GM12878 (cell line): ENCODE measurements at regions of chr2 and their contacts with region 1.

Region 1: DNA sequence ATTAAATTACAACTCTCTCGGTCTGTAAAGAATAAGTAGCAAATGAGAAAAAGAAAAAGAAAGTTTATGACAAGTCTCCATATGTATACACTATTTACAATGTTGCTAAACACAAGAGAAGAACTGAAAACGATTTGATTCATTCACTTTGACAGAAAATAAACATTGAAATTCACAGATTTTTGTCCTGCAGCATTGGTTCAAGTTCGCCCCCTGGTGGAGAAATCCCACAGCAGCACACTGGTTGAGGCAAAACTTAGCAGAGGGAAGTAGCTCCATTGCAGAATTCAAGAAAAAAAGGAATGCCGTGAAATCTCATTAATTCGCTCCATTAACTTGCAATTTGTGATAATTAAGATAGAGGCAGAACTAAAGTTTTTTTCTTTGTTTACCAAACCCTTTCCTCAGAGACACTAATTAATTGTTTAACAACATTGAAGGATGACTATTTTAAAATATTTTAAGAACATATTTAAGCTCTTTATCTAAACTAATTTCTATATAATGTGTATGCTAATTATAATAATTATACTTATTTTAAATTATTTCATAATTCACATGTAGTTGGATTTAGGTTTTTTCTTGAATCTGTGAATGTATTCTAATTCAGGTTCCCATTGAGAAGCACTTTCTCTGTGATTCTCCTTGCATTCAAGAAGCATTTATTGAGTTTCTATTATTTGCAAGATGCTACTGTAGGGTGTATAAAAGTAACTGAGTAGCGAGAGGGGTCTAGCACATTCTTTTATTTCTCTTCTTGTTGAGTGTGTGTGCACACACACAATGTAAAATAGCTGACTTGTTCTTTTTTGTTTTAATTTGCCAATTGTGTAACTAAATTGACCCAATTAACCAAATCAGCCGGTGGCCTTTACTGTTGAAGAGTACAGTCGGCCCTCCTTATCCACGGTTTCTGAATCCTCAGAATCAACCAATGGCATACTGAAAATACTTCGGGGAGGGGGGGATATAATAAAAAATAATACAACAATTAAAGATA is 74.1 kb downstream of the COL4A3 start:
- DNase-seq: peak; percentile 21
- ATAC-seq: peak; percentile 80
- H3K4me3 ChIP-seq: no peak overlapping the region
- H3K27ac ChIP-seq: no peak overlapping the region
- H3K4me1 ChIP-seq: no peaks in the 10 kb centered on the region
- H3K27me3 ChIP-seq: no peaks in the 10 kb centered on the region
- CTCF ChIP-seq: peak; percentile 89 to 95 (median 91); a peak in 5 of 6 replicates
- EP300 ChIP-seq: no peak
- POLR2A ChIP-seq: no peak
- RAD21 ChIP-seq: peak; percentile 97

Region 2: GRCh38 chr2:225668606-225669266 is 1569.8 kb before region 1 on chr2:
- CTCF ChIA-PET with region 1: interaction called, 5 read pairs
- POLR2A ChIA-PET with region 1: no interaction called
- RAD21 ChIA-PET with region 1: no interaction called
- SMC1A ChIA-PET with region 1: interaction called, 6 read pairs
- in situ Hi-C with region 1: no loop called
- intact Hi-C with region 1: loop called (anchors 5 kb)
- DNase-seq: peak; percentile 12
- ATAC-seq: peak; percentile 94
- H3K4me3 ChIP-seq: no peak overlapping the region
- H3K27ac ChIP-seq: no peak overlapping the region
- H3K4me1 ChIP-seq: no peaks in the 10 kb centered on the region
- H3K27me3 ChIP-seq: no peaks in the 10 kb centered on the region
- CTCF ChIP-seq: peak; percentile 72 to 75 (median 73)
- EP300 ChIP-seq: no peak
- POLR2A ChIP-seq: no peak
- RAD21 ChIP-seq: peak; percentile 71

Region 3: DNA sequence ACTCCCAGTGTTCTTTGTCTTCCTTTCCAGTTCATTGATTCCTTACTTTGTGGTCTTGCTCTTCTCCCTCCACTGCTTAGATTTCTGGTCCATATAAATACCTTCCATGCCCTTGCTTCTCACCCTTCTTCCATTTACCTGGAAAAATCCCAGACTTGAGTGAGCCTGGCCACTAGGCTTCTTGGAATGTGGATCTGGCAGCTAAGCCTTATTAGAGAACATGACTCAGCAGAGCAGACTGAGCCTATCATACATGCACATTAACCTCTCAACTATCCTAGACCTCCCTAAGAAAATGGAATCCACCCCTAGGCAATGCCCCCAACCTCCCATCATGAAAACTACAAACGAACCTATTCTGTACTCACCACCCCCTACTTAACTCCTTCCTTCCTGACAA is 275.0 kb before region 1 on chr2:
- CTCF ChIA-PET with region 1: no interaction called
- POLR2A ChIA-PET with region 1: no interaction called
- RAD21 ChIA-PET with region 1: no interaction called
- SMC1A ChIA-PET with region 1: no interaction called
- in situ Hi-C with region 1: no loop called
- intact Hi-C with region 1: no loop called
- DNase-seq: no peak
- ATAC-seq: no peak
- H3K4me3 ChIP-seq: no peak overlapping the region
- H3K27ac ChIP-seq: no peak overlapping the region
- H3K4me1 ChIP-seq: no peaks in the 10 kb centered on the region
- H3K27me3 ChIP-seq: no peaks in the 10 kb centered on the region
- CTCF ChIP-seq: no peak
- EP300 ChIP-seq: no peak
- POLR2A ChIP-seq: no peak
- RAD21 ChIP-seq: no peak

Region 4: DNA sequence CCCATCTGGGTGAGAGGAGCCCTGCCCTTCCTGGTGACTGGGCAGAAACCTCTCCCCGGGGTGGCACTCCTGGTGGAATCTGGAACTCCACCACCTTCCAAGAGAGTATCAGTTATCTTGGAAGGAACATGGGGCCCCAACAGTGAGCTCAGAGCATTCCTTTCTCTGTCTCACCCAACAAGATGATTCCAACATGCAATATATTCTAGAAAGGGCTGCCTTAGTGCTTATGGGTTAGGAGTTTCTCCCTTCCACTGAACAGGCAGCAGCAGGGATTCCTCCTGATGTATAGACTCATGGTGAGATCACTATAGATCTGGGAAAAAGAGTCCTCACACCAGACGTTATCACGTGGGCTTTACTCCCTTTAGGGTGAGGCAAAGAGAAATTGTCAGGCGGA is 221.6 kb before region 1 on chr2:
- CTCF ChIA-PET with region 1: no interaction called
- POLR2A ChIA-PET with region 1: no interaction called
- RAD21 ChIA-PET with region 1: no interaction called
- SMC1A ChIA-PET with region 1: no interaction called
- in situ Hi-C with region 1: no loop called
- intact Hi-C with region 1: no loop called
- DNase-seq: no peak
- ATAC-seq: no peak
- H3K4me3 ChIP-seq: no peak overlapping the region; the same call in 1 of the 2 replicates
- H3K27ac ChIP-seq: no peak overlapping the region
- H3K4me1 ChIP-seq: no peaks in the 10 kb centered on the region
- H3K27me3 ChIP-seq: no peaks in the 10 kb centered on the region
- CTCF ChIP-seq: no peak
- EP300 ChIP-seq: no peak
- POLR2A ChIP-seq: no peak
- RAD21 ChIP-seq: no peak

Region 5: DNA sequence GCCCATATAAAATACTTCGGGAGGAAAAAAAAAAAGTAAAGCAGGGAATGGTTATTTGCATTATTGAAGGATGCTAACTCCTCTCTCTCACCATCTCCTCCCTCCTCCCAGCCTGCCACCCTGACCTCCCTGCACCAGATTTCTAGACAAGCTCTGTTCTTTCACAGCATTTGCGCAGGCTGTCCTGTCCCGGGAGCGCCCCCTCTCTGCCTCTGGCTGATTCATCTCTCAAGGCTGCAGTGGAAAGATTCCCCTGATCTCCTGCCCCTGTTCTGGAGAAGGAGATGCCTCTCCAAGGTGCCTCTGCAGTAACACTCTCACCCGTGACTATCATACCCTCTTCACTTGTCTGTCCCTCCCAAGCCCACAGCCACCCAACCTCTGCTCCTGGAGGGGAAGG is 113.0 kb before region 1 on chr2:
- CTCF ChIA-PET with region 1: interaction called, 100 read pairs
- POLR2A ChIA-PET with region 1: no interaction called
- RAD21 ChIA-PET with region 1: interaction called, 10 read pairs
- SMC1A ChIA-PET with region 1: interaction called, 35 read pairs
- in situ Hi-C with region 1: no loop called
- intact Hi-C with region 1: loop called (anchors 1 kb)
- DNase-seq: no peak
- ATAC-seq: no peak
- H3K4me3 ChIP-seq: no peak overlapping the region
- H3K27ac ChIP-seq: no peak overlapping the region
- H3K4me1 ChIP-seq: no peaks in the 10 kb centered on the region
- H3K27me3 ChIP-seq: no peaks in the 10 kb centered on the region
- CTCF ChIP-seq: peak in 2 of 3 experiments; percentile 5 to 9; a peak in 1 of 6 replicates
- EP300 ChIP-seq: no peak
- POLR2A ChIP-seq: no peak
- RAD21 ChIP-seq: peak; percentile 21; the same call in 1 of the 2 replicates

Region 6: GRCh38 chr2:227132986-227133385 is 105.6 kb before region 1 on chr2:
- CTCF ChIA-PET with region 1: interaction called, 100 read pairs
- POLR2A ChIA-PET with region 1: no interaction called
- RAD21 ChIA-PET with region 1: interaction called, 20 read pairs
- SMC1A ChIA-PET with region 1: interaction called, 35 read pairs
- in situ Hi-C with region 1: loop called (anchors 5 kb)
- intact Hi-C with region 1: loop called (anchors 1 kb)
- DNase-seq: no peak
- ATAC-seq: no peak
- H3K4me3 ChIP-seq: no peak overlapping the region
- H3K27ac ChIP-seq: no peak overlapping the region
- H3K4me1 ChIP-seq: no peaks in the 10 kb centered on the region
- H3K27me3 ChIP-seq: no peaks in the 10 kb centered on the region
- CTCF ChIP-seq: no peak
- EP300 ChIP-seq: no peak
- POLR2A ChIP-seq: no peak
- RAD21 ChIP-seq: no peak

Region 7: DNA sequence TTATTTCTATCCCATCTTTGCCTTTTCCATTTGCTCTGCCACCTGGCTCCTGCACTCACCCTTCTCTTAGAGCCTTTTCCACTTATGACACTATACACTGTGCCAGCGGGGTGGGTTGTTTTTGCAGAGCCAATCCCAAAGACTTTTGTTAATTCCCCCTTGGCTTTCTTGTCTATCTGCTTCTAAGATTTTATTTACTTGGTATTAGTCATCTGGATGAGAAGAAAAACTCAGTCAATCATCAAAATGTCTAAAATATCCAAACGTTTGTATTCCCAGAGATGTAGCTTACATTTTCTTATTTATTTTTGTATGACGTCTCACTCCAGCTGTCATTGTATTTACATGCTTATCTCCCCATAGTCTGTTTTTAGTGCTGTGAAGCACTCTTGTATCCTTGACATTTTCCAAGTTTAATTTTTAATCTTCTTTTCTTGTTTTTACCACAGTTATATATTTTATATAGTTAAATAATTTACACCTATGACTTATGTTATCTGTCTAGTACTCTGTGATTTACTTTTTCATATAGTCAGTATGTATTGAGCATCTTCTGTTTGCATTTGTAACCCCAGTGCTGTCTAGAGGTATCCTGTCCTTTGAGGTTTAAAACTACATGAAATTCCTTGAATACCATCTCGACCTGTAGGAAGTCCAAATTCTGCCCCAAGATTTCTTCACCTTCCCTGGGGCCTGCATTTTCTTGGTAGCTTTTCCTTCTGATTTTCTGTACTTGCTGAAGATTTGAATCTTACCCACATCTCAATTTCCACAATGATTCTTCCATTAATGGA is 19.0 kb before region 1 on chr2:
- CTCF ChIA-PET with region 1: interaction called, 24 read pairs
- POLR2A ChIA-PET with region 1: no interaction called
- RAD21 ChIA-PET with region 1: interaction called, 6 read pairs
- SMC1A ChIA-PET with region 1: interaction called, 6 read pairs
- in situ Hi-C with region 1: no loop called
- intact Hi-C with region 1: no loop called
- DNase-seq: no peak
- ATAC-seq: no peak
- H3K4me3 ChIP-seq: no peak overlapping the region
- H3K27ac ChIP-seq: no peak overlapping the region
- H3K4me1 ChIP-seq: no peaks in the 10 kb centered on the region
- H3K27me3 ChIP-seq: no peaks in the 10 kb centered on the region
- CTCF ChIP-seq: no peak
- EP300 ChIP-seq: no peak
- POLR2A ChIP-seq: no peak
- RAD21 ChIP-seq: no peak

Region 8: GRCh38 chr2:227228061-227228667 is 10.4 kb before region 1 on chr2:
- CTCF ChIA-PET with region 1: interaction called, 24 read pairs
- POLR2A ChIA-PET with region 1: interaction called, 4 read pairs
- RAD21 ChIA-PET with region 1: interaction called, 6 read pairs
- SMC1A ChIA-PET with region 1: interaction called, 3 read pairs
- in situ Hi-C with region 1: no loop called
- intact Hi-C with region 1: no loop called
- DNase-seq: no peak
- ATAC-seq: peak; percentile 25; the same call in 1 of the 3 replicates
- H3K4me3 ChIP-seq: no peak overlapping the region
- H3K27ac ChIP-seq: no peak overlapping the region
- H3K4me1 ChIP-seq: no peaks in the 10 kb centered on the region
- H3K27me3 ChIP-seq: no peaks in the 10 kb centered on the region
- CTCF ChIP-seq: no peak
- EP300 ChIP-seq: no peak
- POLR2A ChIP-seq: no peak
- RAD21 ChIP-seq: no peak

Region 9: GRCh38 chr2:227248876-227249275 is 10.3 kb after region 1 on chr2:
- CTCF ChIA-PET with region 1: interaction called, 28 read pairs
- POLR2A ChIA-PET with region 1: no interaction called
- RAD21 ChIA-PET with region 1: no interaction called
- SMC1A ChIA-PET with region 1: interaction called, 12 read pairs
- in situ Hi-C with region 1: no loop called
- intact Hi-C with region 1: no loop called
- DNase-seq: no peak
- ATAC-seq: no peak
- H3K4me3 ChIP-seq: no peak overlapping the region
- H3K27ac ChIP-seq: no peak overlapping the region
- H3K4me1 ChIP-seq: no peaks in the 10 kb centered on the region
- H3K27me3 ChIP-seq: no peaks in the 10 kb centered on the region
- CTCF ChIP-seq: no peak
- EP300 ChIP-seq: no peak
- POLR2A ChIP-seq: no peak
- RAD21 ChIP-seq: no peak

Region 10: GRCh38 chr2:227415538-227416424 is 177.2 kb after region 1 on chr2:
- CTCF ChIA-PET with region 1: no interaction called
- POLR2A ChIA-PET with region 1: no interaction called
- RAD21 ChIA-PET with region 1: no interaction called
- SMC1A ChIA-PET with region 1: no interaction called
- in situ Hi-C with region 1: no loop called
- intact Hi-C with region 1: no loop called
- DNase-seq: no peak
- ATAC-seq: peak; percentile 45
- H3K4me3 ChIP-seq: no peak overlapping the region
- H3K27ac ChIP-seq: no peak overlapping the region; the same call in 1 of the 2 replicates
- H3K4me1 ChIP-seq: peaks cover 31% of the 10 kb centered on the region
- H3K27me3 ChIP-seq: no peaks in the 10 kb centered on the region
- CTCF ChIP-seq: no peak
- EP300 ChIP-seq: no peak
- POLR2A ChIP-seq: no peak
- RAD21 ChIP-seq: no peak